Heart left ventricle (tissue), 16 donors: ENCODE measurements at regions of chr15 and their contacts with region 1.

Region 1: DNA sequence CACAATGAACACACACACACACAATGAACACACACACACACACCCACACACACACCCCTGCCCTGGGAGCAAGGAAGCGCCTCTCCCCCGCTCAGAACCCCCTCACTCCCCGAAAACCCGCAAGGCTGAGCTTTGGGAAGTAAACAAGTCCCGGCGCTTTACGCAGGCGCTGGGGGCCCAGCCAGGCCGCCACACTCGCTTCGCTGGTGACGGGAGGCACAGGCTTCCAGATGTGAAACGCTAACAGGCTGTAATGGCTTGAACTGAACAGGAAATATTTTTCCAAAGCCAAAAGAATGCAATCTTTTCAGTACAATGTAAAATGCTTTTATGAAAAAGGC is 122.7 kb upstream of the IGF1R start:
- DNase-seq: no peak
- ATAC-seq: peak in 1 of 4 donors; percentile 32
- H3K4me3 ChIP-seq: peak overlapping the region in 1 of 12 donors; percentile 19
- H3K27ac ChIP-seq: no peak overlapping the region
- H3K4me1 ChIP-seq: no peaks in the 10 kb centered on the region
- H3K27me3 ChIP-seq: peaks cover 0 to 10% (median 0%) of the 10 kb centered on the region in 9 donors
- CTCF ChIP-seq: no peak
- POLR2A ChIP-seq: no peak

Region 2: DNA sequence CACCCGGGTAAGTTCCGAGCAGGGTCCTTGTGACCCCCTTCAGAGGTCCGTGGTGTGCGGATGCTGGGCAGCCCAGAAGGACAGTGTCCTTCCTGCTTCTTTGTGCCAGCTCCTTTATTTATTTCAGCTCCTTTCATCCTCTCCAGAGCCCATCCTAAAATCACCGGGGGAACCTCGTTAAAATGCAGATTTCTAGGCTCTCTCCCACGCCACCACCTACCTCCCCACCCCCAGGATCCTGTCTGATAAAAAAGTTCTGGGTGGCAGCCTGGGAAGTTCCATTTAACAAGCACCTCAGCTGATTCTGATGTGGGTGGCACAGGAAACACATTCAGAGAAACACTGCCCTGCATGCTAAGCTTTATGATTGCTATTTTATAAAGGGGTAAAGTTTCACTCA is 110.2 kb after region 1 on chr15:
- intact Hi-C with region 1: loop called in 3 of 10 experiments (anchors 5 to 10 kb)
- DNase-seq: no peak
- ATAC-seq: no peak
- H3K4me3 ChIP-seq: no peak overlapping the region
- H3K27ac ChIP-seq: no peak overlapping the region
- H3K4me1 ChIP-seq: no peaks in the 10 kb centered on the region
- H3K27me3 ChIP-seq: peaks cover 0 to 39% (median 0%) of the 10 kb centered on the region in 9 donors
- CTCF ChIP-seq: no peak
- POLR2A ChIP-seq: no peak